Activated T-helper 2 cell treated with anti-CD3 and anti-CD28 coated beads, Interferon-gamma antibody, Interleukin-2, Interleukin-4, amounts not matched to agents 10 μg/mL and 5 μg/mL and 100 μg/mL, durations not matched to agents 14 hours and 24 hours and 36 hours (primary cell): ENCODE measurements at regions of chr10 and their contacts with region 1.

Region 1: DNA sequence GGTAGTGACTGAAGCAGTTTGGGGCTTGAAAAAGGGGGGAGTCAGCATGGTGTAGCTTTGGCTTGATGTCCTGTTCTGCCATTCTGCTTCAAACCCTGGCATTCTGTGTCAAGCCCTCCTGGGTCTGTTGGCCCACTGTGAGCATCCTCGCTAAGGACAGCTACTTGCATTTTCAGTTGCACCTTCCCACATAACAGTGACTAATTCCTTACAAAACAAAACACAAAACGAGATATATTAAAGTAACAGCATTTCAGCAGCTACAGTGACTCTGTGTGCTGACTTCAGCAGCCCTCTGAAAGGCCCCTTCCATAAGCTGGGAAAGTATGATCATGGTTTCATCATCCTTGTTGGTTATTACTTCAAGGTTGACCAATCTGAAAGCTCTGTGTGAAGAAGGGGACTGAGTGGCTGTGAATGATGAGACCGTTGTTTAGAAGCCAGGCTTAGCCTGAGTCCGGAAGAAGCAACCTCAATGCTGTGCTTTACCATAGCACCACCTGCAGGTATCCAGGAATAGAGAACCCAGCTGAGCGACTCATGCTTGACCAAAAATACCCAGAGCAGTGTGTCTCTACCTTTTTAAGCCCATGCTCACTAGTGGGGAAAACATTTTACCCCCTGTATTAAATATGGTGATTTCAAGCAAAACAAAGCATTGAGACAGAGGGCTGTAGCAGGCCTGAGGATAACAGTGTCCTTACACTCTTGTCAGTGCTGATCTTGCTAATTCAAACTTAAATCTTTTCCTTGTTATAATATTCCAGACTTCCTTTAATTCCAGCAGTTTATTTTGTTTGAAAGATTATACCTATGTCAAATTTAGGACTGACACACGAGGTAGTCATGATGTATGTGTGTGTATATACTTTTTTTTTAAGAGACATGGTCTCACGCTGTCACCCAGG is 42.6 kb upstream of the CC2D2B start:
- DNase-seq: peak; percentile 59
- H3K4me3 Mint-ChIP-seq: peak overlapping the region; percentile 5
- H3K27ac Mint-ChIP-seq: peak overlapping the region; percentile 82
- H3K4me1 Mint-ChIP-seq: peaks cover 56% of the 10 kb centered on the region
- H3K27me3 Mint-ChIP-seq: no peaks in the 10 kb centered on the region

Region 2: GRCh38 chr10:95832216-95833041 is 32.7 kb before region 1 on chr10:
- intact Hi-C with region 1: loop called (anchors 5 kb)
- DNase-seq: peak; percentile 71
- H3K4me3 Mint-ChIP-seq: peak overlapping the region; percentile 87
- H3K27ac Mint-ChIP-seq: peak overlapping the region; percentile 98
- H3K4me1 Mint-ChIP-seq: peaks cover 64% of the 10 kb centered on the region
- H3K27me3 Mint-ChIP-seq: no peaks in the 10 kb centered on the region

Region 3: DNA sequence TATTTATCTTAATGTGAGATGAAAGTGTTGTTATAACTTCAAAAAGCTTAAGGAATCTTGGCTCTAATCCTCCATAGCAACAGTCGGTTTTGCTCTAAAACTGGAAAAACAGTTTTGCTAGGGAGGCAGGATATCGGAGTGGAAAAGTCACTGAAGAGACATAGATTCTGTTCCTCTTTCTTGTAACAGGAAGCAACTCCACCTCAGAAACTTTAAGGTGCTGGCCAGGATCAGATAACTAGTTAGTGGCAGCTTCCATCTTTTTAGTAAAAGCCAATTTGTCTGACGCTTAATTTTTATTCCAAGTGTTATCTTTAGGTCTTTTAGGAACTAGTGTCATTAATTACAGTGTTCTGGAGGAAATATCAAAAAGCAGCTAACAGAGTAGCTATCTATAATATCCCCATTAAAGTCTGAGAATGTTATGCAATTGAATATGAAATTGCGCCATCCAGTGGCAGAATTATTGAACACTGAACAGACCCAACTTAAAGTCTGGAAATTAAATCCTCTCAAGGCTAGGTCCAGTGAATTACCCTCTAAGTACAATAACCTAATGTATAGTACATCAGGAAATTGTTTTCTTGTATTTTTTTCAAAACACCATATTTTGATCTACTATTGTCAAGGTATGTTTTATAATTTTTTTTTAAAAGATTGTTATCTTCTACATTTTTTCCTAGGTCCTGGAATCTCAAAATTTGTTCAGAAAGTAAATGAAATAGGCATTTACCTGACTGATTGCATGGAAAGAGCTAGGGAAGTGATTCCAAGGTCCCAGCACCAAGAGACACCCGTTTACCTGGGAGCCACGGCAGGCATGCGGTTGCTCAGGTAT is 23.3 kb before region 1 on chr10:
- intact Hi-C with region 1: loop called (anchors 1 kb)
- DNase-seq: no peak
- H3K4me3 Mint-ChIP-seq: no peak overlapping the region
- H3K27ac Mint-ChIP-seq: peak overlapping the region; percentile 89
- H3K4me1 Mint-ChIP-seq: peaks cover 56% of the 10 kb centered on the region
- H3K27me3 Mint-ChIP-seq: peaks cover 2% of the 10 kb centered on the region

Region 4: GRCh38 chr10:95907456-95908253 is 42.5 kb after region 1 on chr10 and contains the start of gene CC2D2B:
- intact Hi-C with region 1: loop called (anchors 5 kb)
- DNase-seq: peak; percentile 70
- H3K4me3 Mint-ChIP-seq: peak within 1 kb of the TSS; percentile 92
- H3K27ac Mint-ChIP-seq: peak within 1 kb of the TSS; percentile 93
- H3K4me1 Mint-ChIP-seq: peaks cover 18% of the 10 kb centered on the region
- H3K27me3 Mint-ChIP-seq: peaks cover 10% of the 10 kb centered on the region
- total RNA-seq, gene CC2D2B: 0.18 and 0.75 TPM in 2 replicates